ENCODE measurements at regions of chr3 and their contacts with region 1.

Region 1: GRCh38 chr3:111967651-111968274 is 11.1 kb upstream of the ABHD10 start:
- DNase-seq: peak; percentile 82
- H3K4me3 Mint-ChIP-seq: no peak overlapping the region
- H3K27ac Mint-ChIP-seq: no peak overlapping the region
- H3K4me1 Mint-ChIP-seq: peaks cover 12% of the 10 kb centered on the region
- H3K27me3 Mint-ChIP-seq: no peaks in the 10 kb centered on the region

Region 2: GRCh38 chr3:111717601-111718000 is 250.2 kb before region 1 on chr3:
- CTCF ChIA-PET with region 1: interaction called, 200 read pairs
- POLR2A ChIA-PET with region 1: interaction called, 21 read pairs
- DNase-seq: peak; percentile 74
- H3K4me3 Mint-ChIP-seq: no peak overlapping the region
- H3K27ac Mint-ChIP-seq: peak overlapping the region; percentile 1
- H3K4me1 Mint-ChIP-seq: peaks cover 3% of the 10 kb centered on the region
- H3K27me3 Mint-ChIP-seq: no peaks in the 10 kb centered on the region

Region 3: DNA sequence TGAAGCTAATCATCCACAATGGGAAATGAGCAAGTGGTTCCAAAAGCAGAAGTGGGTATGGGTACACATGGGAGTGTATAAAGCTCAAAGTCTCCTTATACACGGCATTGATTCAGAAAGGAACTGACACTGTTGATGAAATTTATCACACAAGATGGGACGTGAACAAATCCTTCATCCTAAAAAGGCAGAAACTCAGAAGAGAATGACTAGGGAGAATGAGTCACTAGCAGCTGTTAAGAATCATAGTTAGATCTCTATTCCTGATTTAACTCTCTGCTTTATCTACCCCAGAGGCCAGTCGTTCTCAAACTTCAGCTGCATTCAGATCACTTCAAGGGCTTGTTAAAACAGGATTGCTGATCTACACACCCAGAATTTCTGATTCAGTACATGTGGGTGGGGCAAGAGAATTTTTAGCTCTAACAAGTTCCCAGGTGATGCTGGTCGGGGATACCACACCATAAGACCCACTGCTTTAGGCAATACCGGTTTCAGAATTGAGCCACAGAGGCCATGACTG is 206.4 kb before region 1 on chr3:
- CTCF ChIA-PET with region 1: interaction called, 12 read pairs
- POLR2A ChIA-PET with region 1: no interaction called
- DNase-seq: no peak
- H3K4me3 Mint-ChIP-seq: no peak overlapping the region
- H3K27ac Mint-ChIP-seq: no peak overlapping the region
- H3K4me1 Mint-ChIP-seq: peaks cover 8% of the 10 kb centered on the region
- H3K27me3 Mint-ChIP-seq: no peaks in the 10 kb centered on the region

Region 4: GRCh38 chr3:111904376-111905241 is 63.2 kb before region 1 on chr3:
- CTCF ChIA-PET with region 1: no interaction called
- POLR2A ChIA-PET with region 1: no interaction called
- DNase-seq: no peak
- H3K4me3 Mint-ChIP-seq: no peak overlapping the region
- H3K27ac Mint-ChIP-seq: no peak overlapping the region
- H3K4me1 Mint-ChIP-seq: peaks cover 26% of the 10 kb centered on the region
- H3K27me3 Mint-ChIP-seq: no peaks in the 10 kb centered on the region

Region 5: DNA sequence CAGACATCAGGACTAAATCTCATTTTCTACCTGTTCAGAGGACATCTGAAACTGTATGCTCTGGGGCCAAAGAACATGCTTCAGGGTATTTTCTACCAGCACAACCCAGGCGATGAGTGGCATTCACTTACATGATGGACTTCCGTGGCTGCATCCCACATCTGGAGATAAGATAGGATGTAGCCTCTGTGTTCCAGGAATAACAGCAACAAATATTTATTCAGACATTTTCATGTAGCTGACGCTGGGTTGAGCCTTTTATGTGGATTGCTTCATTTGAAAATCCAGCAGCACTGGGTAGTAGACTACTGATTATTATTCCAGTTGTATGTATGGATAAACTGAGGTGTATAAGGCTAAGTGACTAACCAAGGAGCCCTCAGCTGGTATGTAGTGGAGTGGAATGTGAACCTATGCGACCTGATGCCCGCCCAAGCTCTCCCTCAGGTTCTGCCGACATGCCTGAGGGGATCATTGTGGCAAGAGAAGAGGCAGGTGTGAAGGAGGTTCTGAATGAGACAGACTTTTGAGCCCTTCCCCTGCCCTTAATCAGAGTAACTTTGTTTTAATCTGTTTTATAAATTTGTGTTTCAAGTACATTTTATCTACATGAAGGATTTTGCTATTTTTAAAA is 14.8 kb before region 1 on chr3:
- CTCF ChIA-PET with region 1: interaction called, 12 read pairs
- POLR2A ChIA-PET with region 1: no interaction called
- DNase-seq: no peak
- H3K4me3 Mint-ChIP-seq: no peak overlapping the region
- H3K27ac Mint-ChIP-seq: no peak overlapping the region
- H3K4me1 Mint-ChIP-seq: no peaks in the 10 kb centered on the region
- H3K27me3 Mint-ChIP-seq: no peaks in the 10 kb centered on the region

Region 6: DNA sequence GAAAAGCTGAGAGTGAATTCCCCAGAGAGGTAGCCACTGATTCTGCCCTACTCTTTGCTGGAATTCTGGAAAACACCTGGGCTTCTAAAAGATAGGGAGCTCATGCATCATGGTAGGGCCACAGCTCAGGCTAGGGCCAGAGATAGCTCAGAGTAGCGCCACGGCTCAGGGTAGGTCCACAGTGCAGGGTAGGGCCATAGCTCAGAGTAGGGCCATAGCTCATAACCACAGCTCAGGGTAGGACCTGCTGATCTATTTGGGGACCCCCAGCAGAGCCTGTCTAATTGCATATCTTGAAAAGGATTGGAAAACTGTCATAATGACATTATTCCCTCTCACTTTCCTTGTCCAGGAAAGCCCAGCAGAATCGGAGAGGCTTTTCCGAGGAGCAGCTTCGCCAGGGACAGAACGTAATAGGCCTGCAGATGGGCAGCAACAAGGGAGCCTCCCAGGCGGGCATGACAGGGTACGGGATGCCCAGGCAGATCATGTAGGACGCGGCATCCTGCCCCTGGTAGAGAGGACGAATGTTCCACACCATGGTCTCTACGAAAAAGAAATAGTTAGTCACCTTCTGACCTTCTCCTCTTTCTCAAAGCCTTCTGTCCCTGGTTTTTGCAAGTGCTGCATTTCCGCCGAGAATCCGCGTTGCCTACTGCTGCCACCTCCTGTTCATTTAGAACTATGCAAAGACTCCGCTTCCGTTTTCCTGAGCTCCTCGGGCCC is 45.5 kb after region 1 on chr3:
- CTCF ChIA-PET with region 1: interaction called, 19 read pairs
- POLR2A ChIA-PET with region 1: no interaction called
- DNase-seq: peak; percentile 75
- H3K4me3 Mint-ChIP-seq: no peak overlapping the region
- H3K27ac Mint-ChIP-seq: no peak overlapping the region
- H3K4me1 Mint-ChIP-seq: peaks cover 17% of the 10 kb centered on the region
- H3K27me3 Mint-ChIP-seq: no peaks in the 10 kb centered on the region

Region 7: DNA sequence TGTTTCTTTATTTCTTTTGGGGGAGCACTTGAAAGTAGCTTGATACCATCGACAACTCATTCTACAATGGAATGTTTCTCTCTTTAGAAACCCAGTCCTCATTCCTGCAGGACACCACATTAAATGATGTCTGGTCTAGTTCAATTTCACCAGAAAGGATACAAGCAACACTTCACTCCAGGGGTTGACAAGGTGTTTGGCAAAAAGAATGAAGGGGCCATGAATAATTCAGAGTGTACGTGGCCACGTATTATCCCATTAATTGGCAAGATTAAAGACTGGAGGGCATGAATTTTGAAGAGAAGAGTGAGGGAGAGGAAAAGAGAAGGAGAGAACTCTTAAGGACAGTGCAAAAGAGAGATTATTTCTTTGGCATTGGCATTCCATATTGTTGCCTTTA is 67.5 kb after region 1 on chr3:
- CTCF ChIA-PET with region 1: no interaction called
- POLR2A ChIA-PET with region 1: no interaction called
- DNase-seq: no peak
- H3K4me3 Mint-ChIP-seq: no peak overlapping the region
- H3K27ac Mint-ChIP-seq: no peak overlapping the region
- H3K4me1 Mint-ChIP-seq: no peaks in the 10 kb centered on the region
- H3K27me3 Mint-ChIP-seq: peaks cover 2% of the 10 kb centered on the region